ENCODE measurements at regions of chr5 and their contacts with region 1.

Region 1: DNA sequence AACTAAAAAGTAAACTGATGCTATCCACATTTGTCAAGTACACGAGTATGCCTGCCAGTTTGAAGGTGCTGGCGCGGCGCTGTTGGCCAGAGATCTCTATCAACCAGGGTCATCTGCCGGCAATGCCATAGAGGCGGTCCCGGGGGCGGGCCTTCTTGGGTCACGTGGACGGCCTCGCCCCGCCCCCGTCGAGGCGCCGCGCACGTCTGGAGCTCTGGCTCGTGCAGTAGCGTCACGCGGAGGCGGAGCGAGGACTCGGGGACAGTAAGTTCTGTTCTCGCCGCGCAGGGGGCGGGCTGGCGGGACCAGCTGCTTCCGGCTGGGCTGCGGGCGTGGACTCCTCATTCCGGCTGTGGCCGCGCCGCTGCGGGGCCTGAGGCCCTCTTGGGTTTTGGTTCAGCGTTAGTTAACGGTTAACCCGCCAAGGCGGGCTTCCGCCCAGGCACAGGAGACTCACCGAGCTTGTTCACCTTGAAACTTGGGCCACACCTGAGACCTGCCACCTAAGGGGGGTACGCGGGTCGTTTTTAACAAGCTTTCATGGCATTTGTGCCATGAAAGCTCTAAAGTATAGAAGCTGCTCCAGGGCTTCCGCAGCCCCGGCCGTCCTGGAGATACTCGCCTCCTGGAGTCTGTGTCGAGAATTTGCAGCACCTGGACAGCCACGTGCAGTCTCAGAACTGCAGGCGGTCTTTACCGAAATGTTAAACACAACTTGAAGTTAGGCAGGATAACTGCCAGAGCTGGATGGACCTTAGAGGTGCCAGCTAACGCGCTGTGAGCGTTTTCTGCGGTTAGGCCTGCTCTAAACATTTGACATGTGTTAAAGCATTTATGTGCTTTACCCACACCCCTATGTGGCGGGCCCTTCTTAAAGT is at the start of gene RFESD:
- DNase-seq: peak; percentile 100
- H3K4me3 ChIP-seq: peak within 1 kb of the TSS; percentile 54 to 60 (median 56)
- H3K27ac ChIP-seq: peak within 1 kb of the TSS; percentile 93 to 96 (median 94)
- H3K4me1 ChIP-seq: peaks cover 0 to 11% (median 5%) of the 10 kb centered on the region in 4 donors
- H3K27me3 ChIP-seq: no peaks in the 10 kb centered on the region
- CTCF ChIP-seq: no peak
- EP300 ChIP-seq: peak; percentile 98 to 100 (median 98)
- POLR2A ChIP-seq: peak; percentile 97
- total RNA-seq, gene RFESD: 1.2 to 4.9 (median 2.1) TPM

Region 2: DNA sequence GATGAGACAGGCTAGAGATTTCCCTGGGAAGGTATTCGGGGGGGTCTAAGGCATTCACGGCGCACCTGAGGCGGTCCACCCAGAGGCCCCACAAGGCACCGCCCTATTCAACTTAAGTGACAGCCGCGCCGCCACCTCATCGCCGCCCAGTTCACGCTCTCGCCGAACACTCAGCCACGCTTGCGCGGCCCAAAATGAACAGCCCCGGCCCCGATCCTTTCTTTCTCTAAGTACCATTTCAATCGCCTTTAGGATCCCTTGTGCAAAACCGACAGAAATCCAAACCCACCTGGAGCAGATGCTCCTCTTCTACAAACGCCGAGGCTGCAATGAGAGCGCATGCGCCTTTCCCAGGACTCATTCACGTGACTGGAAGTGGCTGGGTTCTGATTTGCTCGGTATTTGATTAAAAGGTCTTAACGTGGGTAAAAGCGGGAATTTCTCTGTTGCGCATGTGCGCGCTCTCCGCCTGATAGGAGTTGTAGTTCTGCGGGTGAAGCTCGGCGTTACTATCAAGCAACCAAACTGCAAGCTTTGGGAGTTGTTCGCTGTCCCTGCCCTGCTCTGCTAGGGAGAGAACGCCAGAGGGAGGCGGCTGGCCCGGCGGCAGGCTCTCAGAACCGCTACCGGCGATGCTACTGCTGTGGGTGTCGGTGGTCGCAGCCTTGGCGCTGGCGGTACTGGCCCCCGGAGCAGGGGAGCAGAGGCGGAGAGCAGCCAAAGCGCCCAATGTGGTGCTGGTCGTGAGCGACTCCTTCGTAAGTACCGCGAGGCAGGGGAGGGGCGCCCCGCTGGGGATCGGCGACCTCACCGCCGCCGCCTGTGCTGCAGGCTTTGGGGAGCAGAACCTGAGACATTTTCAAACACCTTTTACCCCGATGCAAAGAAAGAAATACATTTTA is 91.9 kb before region 1 on chr5 and contains the starts of genes ARSK and SKIC3:
- intact Hi-C with region 1: loop called (anchors 5 kb)
- DNase-seq: peak; percentile 98
- H3K4me3 ChIP-seq: peak within 1 kb of the TSS; percentile 59 to 90 (median 74)
- H3K27ac ChIP-seq: peak within 1 kb of the TSS; percentile 81 to 93 (median 90)
- H3K4me1 ChIP-seq: peaks cover 0 to 28% (median 20%) of the 10 kb centered on the region in 4 donors
- H3K27me3 ChIP-seq: no peaks in the 10 kb centered on the region
- CTCF ChIP-seq: peak in 3 of 4 experiments; percentile 27 to 32 (median 27)
- EP300 ChIP-seq: peak in 1 of 4 donors; percentile 61
- POLR2A ChIP-seq: peak; percentile 70 to 74
- total RNA-seq, gene ARSK: 6.7 to 13.3 (median 9.9) TPM
- total RNA-seq, gene SKIC3: 55.8 to 103 (median 71.3) TPM

Region 3: GRCh38 chr5:95697781-95698681 is 51.2 kb after region 1 on chr5:
- intact Hi-C with region 1: no loop called
- DNase-seq: no peak
- H3K4me3 ChIP-seq: no peak overlapping the region
- H3K27ac ChIP-seq: no peak overlapping the region
- H3K4me1 ChIP-seq: peaks cover 0 to 5% (median 0%) of the 10 kb centered on the region in 4 donors
- H3K27me3 ChIP-seq: no peaks in the 10 kb centered on the region
- CTCF ChIP-seq: no peak
- EP300 ChIP-seq: no peak
- POLR2A ChIP-seq: no peak

Region 4: GRCh38 chr5:95773335-95774059 is 126.7 kb after region 1 on chr5:
- intact Hi-C with region 1: loop called (anchors 5 kb)
- DNase-seq: no peak
- H3K4me3 ChIP-seq: no peak overlapping the region
- H3K27ac ChIP-seq: no peak overlapping the region
- H3K4me1 ChIP-seq: peaks cover 0 to 17% (median 7%) of the 10 kb centered on the region in 4 donors
- H3K27me3 ChIP-seq: no peaks in the 10 kb centered on the region
- CTCF ChIP-seq: no peak
- EP300 ChIP-seq: no peak
- POLR2A ChIP-seq: no peak

Region 5: GRCh38 chr5:95822542-95823181 is 175.9 kb after region 1 on chr5 and contains the start of gene GLRX:
- intact Hi-C with region 1: loop called (anchors 5 kb)
- DNase-seq: peak; percentile 89
- H3K4me3 ChIP-seq: peak within 1 kb of the TSS; percentile 58 to 69 (median 64)
- H3K27ac ChIP-seq: peak within 1 kb of the TSS; percentile 83 to 89 (median 85)
- H3K4me1 ChIP-seq: peaks cover 0 to 53% (median 43%) of the 10 kb centered on the region in 4 donors
- H3K27me3 ChIP-seq: no peaks in the 10 kb centered on the region
- CTCF ChIP-seq: no peak
- EP300 ChIP-seq: no peak
- POLR2A ChIP-seq: peak in 1 of 2 donors; percentile 71
- total RNA-seq, gene GLRX: 30.2 to 43.2 (median 42.8) TPM

Region 6: GRCh38 chr5:95961617-95962474 is 315.1 kb after region 1 on chr5 and contains the start of gene ELL2:
- intact Hi-C with region 1: loop called (anchors 2 kb)
- DNase-seq: peak; percentile 99
- H3K4me3 ChIP-seq: peak within 1 kb of the TSS; percentile 85 to 94 (median 92)
- H3K27ac ChIP-seq: peak within 1 kb of the TSS; percentile 97 to 99 (median 98)
- H3K4me1 ChIP-seq: peaks cover 0 to 31% (median 21%) of the 10 kb centered on the region in 4 donors
- H3K27me3 ChIP-seq: no peaks in the 10 kb centered on the region
- CTCF ChIP-seq: no peak
- EP300 ChIP-seq: peak; percentile 99 to 100 (median 99)
- POLR2A ChIP-seq: peak; percentile 82 to 86
- total RNA-seq, gene ELL2: 26.6 to 35.3 (median 29.8) TPM

Region 7: GRCh38 chr5:96601811-96602244 is 955.0 kb after region 1 on chr5:
- intact Hi-C with region 1: loop called (anchors 10 kb)
- DNase-seq: no peak
- H3K4me3 ChIP-seq: no peak overlapping the region
- H3K27ac ChIP-seq: no peak overlapping the region
- H3K4me1 ChIP-seq: no peaks in the 10 kb centered on the region
- H3K27me3 ChIP-seq: no peaks in the 10 kb centered on the region
- CTCF ChIP-seq: peak; percentile 37 to 75 (median 59)
- EP300 ChIP-seq: no peak
- POLR2A ChIP-seq: no peak